AG04449 (cell line): ENCODE measurements at regions of chr11 and their contacts with region 1.

Region 1: DNA sequence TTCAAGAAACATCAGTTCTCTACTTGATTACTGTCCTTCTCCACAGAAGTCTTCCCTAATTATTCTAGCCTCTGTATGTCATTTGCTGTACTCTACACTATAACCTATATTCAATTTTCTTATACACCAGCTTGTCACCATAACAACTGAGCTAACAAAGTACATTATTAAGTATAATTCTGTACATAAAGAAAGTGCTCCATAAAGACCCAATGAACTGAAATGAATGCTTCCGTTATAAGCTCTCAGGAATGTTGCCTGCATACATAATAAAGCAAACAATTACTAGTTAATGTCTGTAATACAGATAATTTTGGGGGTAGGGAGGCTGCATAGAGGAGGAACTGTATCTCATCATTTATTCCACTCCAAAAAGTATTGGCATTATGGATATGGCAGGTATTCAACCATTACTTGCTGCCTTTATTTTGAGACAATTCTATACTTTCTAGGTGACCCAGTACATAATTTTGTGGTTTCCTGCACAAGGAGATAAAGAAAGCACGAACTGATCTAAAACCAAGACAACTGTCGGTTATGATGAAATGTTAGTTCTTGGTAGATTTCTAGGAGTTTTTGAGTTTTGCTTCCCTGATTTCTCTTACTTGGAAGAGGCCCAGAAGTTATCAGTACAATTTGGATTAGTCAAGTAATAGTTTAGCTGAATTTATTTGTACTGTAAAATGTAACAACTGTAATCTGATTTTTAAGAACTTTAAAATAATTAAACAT is 202.5 kb downstream of the SBF2 start:
- DNase-seq: no peak
- H3K4me3 ChIP-seq: no peak overlapping the region
- CTCF ChIP-seq: no peak

Region 2: DNA sequence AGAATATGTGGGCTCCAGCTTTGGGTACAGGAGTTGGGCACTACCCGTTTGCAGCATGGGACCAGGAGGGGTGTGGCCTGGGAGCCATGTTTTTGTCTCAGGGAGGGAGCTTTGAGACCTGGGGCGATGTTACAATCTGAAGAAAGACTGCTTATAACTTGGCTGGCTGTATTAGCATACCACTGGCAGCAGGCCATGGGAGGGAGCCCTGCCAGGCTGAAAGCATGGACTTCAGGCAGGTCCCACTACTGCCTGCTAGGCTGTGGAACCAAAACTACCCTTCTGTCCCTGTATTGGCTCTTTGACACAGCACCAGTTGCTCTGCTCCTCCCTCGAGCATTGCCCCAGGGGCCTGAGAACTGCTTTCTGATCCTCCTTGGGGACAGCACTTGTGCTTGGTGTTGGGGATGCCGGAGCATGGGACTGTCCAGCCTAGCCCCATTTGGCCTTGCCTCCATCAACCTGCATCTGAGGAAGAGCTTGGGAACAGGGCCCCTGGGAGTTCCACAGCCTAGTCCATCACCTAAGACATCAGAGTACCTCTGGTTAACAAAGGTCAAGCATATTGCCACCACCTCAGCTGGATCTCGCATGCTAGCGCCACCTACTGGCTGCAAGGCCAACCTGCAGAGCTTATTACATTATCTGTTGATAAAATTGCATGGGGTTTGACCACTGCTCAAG is 14.9 kb before region 1 on chr11:
- CTCF ChIA-PET with region 1: interaction called, 13 read pairs
- POLR2A ChIA-PET with region 1: no interaction called
- DNase-seq: no peak
- H3K4me3 ChIP-seq: no peak overlapping the region
- CTCF ChIP-seq: peak; percentile 28